ENCODE measurements at regions of chr12 and their contacts with region 1.

Region 1: DNA sequence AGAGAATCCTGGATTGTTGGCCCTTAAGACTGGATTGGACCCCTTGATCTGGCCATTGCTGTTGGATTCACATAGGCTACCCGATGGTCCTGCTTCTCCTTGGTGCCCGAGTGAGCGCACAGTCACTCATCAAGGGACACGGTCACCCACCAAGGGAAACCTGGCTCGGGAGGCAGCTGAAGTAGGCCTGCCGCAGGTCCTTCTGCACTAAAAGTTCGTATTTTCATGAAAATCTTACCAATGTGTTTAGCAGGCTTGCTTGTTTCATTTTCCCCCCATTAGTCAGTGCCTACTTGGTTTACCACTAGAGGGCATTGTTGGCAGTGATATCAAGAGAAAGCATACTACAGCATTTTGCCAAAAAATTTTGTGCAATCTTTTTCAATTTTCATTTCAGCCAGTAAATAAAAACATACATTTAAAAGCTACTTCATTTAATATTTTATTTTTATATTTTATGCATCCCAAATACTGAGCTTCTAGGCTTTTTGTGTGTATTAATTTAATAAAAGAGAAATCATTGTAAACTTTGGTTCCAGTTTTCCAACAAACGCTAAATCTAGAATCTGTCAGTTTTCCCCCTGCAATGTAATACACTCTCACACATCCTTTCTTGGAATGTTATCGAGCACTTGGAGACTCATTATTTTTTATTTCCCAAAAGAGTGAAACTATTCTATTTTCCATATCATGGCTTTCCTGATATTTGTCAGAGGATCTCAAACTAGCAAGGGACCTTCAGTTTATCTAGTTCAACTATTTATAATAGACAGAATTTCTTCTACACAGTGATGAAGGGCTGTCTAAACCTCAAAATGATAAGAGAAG is 116.7 kb downstream of the LMNTD1 start:
- DNase-seq: no peak
- H3K4me3 ChIP-seq: peak overlapping the region in 2 of 8 donors; percentile 28 to 54
- H3K27ac ChIP-seq: no peak overlapping the region
- H3K4me1 ChIP-seq: peaks cover 0 to 11% (median 5%) of the 10 kb centered on the region in 6 donors
- H3K27me3 ChIP-seq: no peaks in the 10 kb centered on the region
- CTCF ChIP-seq: peak; percentile 39 to 85 (median 76)
- POLR2A ChIP-seq: no peak

Region 2: DNA sequence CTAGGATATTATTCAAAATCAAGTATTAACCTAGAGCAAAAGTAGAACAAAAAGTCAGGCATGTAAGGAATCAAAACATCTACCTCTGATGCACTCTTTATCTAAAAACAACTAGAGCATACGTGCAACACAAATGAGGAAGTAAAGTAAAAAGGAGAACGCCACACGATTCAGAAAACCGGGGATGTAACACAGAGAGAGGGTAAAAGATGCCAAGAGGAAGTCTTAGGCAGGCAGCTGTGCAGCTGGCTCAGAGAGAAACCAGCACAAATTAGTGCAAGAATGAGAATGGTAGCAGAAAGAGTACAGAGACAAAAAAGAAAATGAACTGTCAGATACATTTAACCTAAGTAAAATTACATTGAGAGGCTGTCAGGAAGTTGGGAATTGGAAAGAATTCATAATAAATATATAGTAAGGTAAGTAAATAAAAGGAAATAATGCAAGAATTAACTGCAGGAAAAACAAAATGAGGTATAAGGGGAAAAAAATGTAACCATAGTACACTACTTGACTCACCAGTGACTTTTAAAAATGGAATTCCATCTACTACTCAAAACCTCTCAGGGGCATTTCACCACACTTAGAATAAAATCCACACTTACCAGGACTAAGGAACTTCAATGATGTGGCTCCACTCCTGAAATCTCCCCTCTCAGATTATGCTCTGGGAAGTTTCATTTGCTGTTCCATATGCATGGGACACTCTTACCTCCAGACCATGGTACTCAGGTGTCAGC is 504.6 kb before region 1 on chr12:
- intact Hi-C with region 1: no loop called
- DNase-seq: no peak
- H3K4me3 ChIP-seq: no peak overlapping the region
- H3K27ac ChIP-seq: peak overlapping the region in 2 of 8 donors; percentile 23 to 26
- H3K4me1 ChIP-seq: peaks cover 0 to 13% (median 5%) of the 10 kb centered on the region in 6 donors
- H3K27me3 ChIP-seq: no peaks in the 10 kb centered on the region
- CTCF ChIP-seq: no peak
- POLR2A ChIP-seq: no peak

Region 3: DNA sequence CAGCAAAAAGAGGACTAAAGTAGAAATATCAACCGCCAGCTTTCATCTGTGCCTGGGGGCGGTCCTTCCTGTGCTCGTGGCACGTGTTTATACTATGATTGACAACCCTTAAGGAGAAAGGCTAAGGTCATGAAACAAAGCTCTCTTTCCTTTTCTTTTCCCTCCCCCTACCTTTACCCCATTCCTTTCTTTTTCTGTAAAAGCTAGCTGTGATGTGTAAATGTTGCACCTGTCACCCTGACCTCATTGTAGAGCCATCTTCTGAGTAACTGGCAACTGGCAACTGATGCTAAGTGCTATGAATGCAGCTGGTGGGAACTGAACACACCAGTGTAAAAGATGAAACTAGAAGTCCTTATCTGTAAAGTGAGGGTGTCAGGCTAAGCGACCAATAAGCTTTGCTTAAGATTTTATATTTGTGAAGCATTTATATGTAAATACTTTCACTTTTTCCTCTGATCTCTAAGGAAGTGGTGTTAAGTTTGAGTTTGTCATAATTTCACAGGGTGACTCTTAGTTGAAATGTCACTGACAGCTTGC is 384.7 kb before region 1 on chr12:
- intact Hi-C with region 1: no loop called
- DNase-seq: peak; percentile 86
- H3K4me3 ChIP-seq: peak overlapping the region in 7 of 8 donors; percentile 50 to 72 (median 52)
- H3K27ac ChIP-seq: peak overlapping the region; percentile 43 to 96 (median 92)
- H3K4me1 ChIP-seq: peaks cover 6 to 53% (median 24%) of the 10 kb centered on the region in 6 donors
- H3K27me3 ChIP-seq: no peaks in the 10 kb centered on the region
- CTCF ChIP-seq: no peak
- POLR2A ChIP-seq: peak in 1 of 3 donors; percentile 18

Region 4: DNA sequence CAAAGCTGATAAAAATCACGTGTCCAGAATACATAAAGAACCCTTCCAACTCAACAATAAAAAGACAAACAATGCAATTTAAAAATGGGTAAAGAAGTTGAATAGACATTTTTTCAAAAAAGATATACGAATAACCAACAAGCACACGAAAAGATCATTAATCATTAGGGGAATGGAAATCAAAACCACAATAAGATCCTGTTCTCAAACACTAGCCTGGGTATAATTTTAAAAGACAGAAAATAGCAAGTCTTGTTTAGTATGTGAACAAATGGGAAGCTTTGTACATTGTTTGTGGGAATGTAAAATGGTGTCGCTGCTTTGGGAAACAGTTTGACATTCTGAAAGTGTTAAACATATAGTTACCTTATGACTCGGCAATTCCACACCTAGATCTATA is 203.0 kb after region 1 on chr12:
- intact Hi-C with region 1: no loop called
- DNase-seq: no peak
- H3K4me3 ChIP-seq: no peak overlapping the region
- H3K27ac ChIP-seq: no peak overlapping the region
- H3K4me1 ChIP-seq: no peaks in the 10 kb centered on the region
- H3K27me3 ChIP-seq: no peaks in the 10 kb centered on the region
- CTCF ChIP-seq: no peak
- POLR2A ChIP-seq: no peak

Region 5: GRCh38 chr12:26028953-26029735 is 592.7 kb after region 1 on chr12:
- intact Hi-C with region 1: loop called (anchors 5 kb)
- DNase-seq: no peak
- H3K4me3 ChIP-seq: no peak overlapping the region
- H3K27ac ChIP-seq: no peak overlapping the region
- H3K4me1 ChIP-seq: peaks cover 0 to 4% (median 0%) of the 10 kb centered on the region in 6 donors
- H3K27me3 ChIP-seq: no peaks in the 10 kb centered on the region
- CTCF ChIP-seq: peak in 9 of 11 experiments; percentile 24 to 73 (median 60)
- POLR2A ChIP-seq: no peak

Region 6: DNA sequence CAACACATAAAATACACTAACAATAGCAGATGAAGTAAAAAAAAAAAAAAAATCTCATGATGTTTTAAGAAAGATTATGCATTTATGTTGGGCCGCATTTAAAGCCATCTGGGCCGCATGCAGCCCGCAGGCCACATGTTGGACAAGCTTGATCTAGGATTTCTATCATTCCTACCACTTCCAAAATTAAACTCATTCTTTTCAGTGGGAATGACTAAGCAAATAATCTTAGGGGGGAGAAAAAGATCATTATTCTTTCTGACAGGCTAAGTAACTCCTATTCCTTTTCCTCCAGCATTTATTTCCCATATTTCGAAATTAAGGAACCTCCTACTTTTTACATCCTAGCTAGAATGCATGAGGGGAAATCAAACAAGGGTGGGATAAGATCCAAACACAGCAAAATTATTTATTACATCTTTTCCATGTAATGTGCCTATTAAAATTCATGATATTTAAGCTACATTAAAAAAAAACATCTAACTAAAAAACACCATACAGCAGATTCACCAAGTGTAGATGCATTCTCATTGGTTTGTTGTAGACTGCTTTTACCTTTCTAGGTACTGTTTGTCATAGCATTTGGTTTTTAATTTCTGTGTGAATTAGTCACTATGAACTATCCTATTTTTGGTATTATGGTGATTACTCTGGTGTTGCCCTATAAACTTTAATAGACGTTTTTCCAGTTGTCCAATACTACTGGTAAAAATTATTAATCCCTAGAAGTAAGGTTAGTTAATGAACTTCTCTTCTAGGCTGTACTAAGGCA is 598.1 kb after region 1 on chr12:
- intact Hi-C with region 1: loop called (anchors 5 kb)
- DNase-seq: no peak
- H3K4me3 ChIP-seq: no peak overlapping the region
- H3K27ac ChIP-seq: no peak overlapping the region
- H3K4me1 ChIP-seq: no peaks in the 10 kb centered on the region
- H3K27me3 ChIP-seq: no peaks in the 10 kb centered on the region
- CTCF ChIP-seq: no peak
- POLR2A ChIP-seq: no peak

Measured in spleen (tissue), 13 donors.